Left ventricle myocardium inferior (tissue), 1 donor: ENCODE measurements at regions of chr1 and their contacts with region 1.

Region 1: GRCh38 chr1:75724472-75725022 is at the start of gene ACADM:
- DNase-seq: peak; percentile 91
- H3K4me3 ChIP-seq: peak within 1 kb of the TSS; percentile 78
- H3K27ac ChIP-seq: peak within 1 kb of the TSS; percentile 92
- H3K4me1 ChIP-seq: peaks cover 49% of the 10 kb centered on the region
- H3K27me3 ChIP-seq: no peaks in the 10 kb centered on the region
- CTCF ChIP-seq: no peak
- total RNA-seq, gene ACADM: 358 TPM

Region 2: GRCh38 chr1:75785983-75786853 is 61.7 kb after region 1 on chr1 and contains the start of gene RABGGTB:
- intact Hi-C with region 1: loop called (anchors 10 kb)
- DNase-seq: peak; percentile 93
- H3K4me3 ChIP-seq: peak within 1 kb of the TSS; percentile 87
- H3K27ac ChIP-seq: peak within 1 kb of the TSS; percentile 90
- H3K4me1 ChIP-seq: peaks cover 59% of the 10 kb centered on the region
- H3K27me3 ChIP-seq: no peaks in the 10 kb centered on the region
- CTCF ChIP-seq: no peak
- total RNA-seq, gene RABGGTB: 64.4 TPM